MCF 10A (cell line): ENCODE measurements at regions of chr12 and their contacts with region 1.

Region 1: DNA sequence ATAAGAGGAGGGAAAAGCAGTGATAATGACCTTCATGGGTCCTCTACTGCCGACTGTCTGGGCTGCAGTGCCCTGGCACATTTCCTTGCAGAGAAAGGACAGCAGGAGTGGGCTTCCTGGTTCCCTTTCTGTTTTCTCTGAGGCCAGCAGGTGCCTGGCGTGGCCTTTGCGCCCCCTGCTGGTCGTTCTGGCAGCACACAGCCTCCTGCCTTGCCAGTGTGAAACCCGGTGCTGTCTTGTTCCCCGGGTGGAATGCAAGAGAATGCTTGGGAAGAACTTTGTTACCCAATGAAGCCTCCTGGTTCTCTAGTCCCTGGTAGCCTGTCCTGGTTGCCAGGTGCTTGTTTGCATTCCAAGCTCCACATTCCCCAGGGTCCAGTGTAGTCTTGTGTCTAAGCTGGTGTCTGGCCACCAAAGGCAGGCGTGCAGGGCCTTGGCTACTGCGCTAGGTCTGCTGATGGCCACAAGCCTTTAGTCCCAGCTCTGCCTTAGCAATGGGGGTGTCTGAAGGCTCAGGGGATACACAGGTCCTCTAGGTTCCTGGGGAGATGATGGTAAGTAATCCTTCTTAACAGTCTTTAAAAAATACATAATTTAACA is 1392.4 kb upstream of the TMEM132C start:
- DNase-seq: peak; percentile 60
- H3K4me3 Mint-ChIP-seq: no peak overlapping the region
- H3K27ac Mint-ChIP-seq: no peak overlapping the region
- H3K4me1 Mint-ChIP-seq: no peaks in the 10 kb centered on the region
- H3K27me3 Mint-ChIP-seq: no peaks in the 10 kb centered on the region
- CTCF ChIP-seq: peak; percentile 94

Region 2: DNA sequence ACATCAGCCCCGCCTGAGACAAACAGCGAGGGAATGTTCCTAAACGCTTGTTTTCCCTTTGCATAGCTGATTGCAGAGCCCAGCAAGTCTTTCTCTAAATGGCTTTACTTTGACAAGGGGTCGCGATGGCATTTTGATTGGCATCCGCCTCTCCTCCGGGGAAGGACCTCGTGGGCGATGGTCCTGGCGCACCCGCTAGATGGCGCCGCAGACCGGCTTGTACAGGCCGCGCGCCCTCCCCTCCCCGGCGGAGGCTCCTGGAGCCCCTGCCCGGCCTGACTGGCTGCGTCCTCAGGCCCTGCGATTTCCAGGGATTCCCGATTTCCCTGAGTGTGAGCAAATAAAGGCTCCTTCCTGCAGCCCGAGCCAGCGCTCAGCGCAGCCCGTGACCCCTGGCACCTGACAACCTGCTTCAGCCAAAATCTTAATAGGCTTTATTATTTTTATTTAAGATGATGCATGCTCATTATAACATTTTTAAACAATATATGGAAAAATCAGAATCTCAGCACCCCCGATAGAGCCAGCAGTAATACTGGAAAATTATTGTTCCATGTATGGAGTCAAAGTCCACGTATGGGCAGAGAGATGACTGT is 1341.0 kb before region 1 on chr12:
- CTCF ChIA-PET with region 1: interaction called, 12 read pairs
- POLR2A ChIA-PET with region 1: no interaction called
- intact Hi-C with region 1: loop called (anchors 1 kb)
- DNase-seq: peak; percentile 34
- H3K4me3 Mint-ChIP-seq: no peak overlapping the region
- H3K27ac Mint-ChIP-seq: no peak overlapping the region
- H3K4me1 Mint-ChIP-seq: no peaks in the 10 kb centered on the region
- H3K27me3 Mint-ChIP-seq: no peaks in the 10 kb centered on the region
- CTCF ChIP-seq: peak; percentile 90

Region 3: GRCh38 chr12:126636821-126637220 is 237.7 kb before region 1 on chr12:
- CTCF ChIA-PET with region 1: no interaction called
- POLR2A ChIA-PET with region 1: no interaction called
- intact Hi-C with region 1: no loop called
- DNase-seq: no peak
- H3K4me3 Mint-ChIP-seq: no peak overlapping the region
- H3K27ac Mint-ChIP-seq: no peak overlapping the region
- H3K4me1 Mint-ChIP-seq: no peaks in the 10 kb centered on the region
- H3K27me3 Mint-ChIP-seq: no peaks in the 10 kb centered on the region
- CTCF ChIP-seq: no peak

Region 4: DNA sequence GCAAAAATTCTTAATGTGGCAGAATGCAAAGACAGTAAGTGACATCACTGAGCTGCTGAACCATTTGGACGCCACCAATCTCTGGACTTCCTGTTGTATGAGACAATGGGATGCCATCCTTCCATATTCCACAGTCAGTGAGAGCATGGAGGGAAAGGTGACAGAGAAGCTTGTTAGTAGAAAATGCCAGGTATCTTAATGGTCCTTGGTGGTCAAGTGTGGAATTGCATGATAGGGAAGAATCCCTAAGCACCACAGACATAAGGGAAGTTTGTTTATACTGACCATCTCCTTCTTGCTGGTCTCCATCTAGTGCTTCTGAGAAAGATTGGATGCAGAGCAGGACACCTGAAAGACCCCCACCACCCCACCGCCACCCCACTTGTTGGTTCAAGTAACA is 17.6 kb before region 1 on chr12:
- CTCF ChIA-PET with region 1: interaction called, 11 read pairs
- POLR2A ChIA-PET with region 1: no interaction called
- intact Hi-C with region 1: no loop called
- DNase-seq: no peak
- H3K4me3 Mint-ChIP-seq: no peak overlapping the region
- H3K27ac Mint-ChIP-seq: no peak overlapping the region
- H3K4me1 Mint-ChIP-seq: no peaks in the 10 kb centered on the region
- H3K27me3 Mint-ChIP-seq: no peaks in the 10 kb centered on the region
- CTCF ChIP-seq: no peak

Region 5: DNA sequence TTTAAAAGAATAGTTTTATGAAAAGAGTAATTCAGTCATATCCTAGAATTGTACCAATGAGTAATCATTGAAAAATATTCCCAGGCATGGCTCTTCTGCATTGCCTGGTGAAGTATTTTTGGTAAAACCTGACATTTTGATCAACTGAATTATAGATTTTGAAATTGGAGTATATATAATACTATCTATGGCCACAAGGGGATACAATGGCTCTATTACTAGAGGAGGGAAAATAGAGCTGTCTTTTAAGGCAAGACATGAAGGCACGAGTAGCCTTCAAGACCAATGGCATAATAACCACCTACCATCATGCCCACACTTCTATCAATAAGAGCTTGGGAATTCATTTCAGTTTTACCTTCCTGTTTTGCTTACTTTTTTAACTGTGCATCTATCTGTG is 151.0 kb after region 1 on chr12:
- CTCF ChIA-PET with region 1: no interaction called
- POLR2A ChIA-PET with region 1: no interaction called
- intact Hi-C with region 1: no loop called
- DNase-seq: peak; percentile 14
- H3K4me3 Mint-ChIP-seq: no peak overlapping the region
- H3K27ac Mint-ChIP-seq: no peak overlapping the region
- H3K4me1 Mint-ChIP-seq: no peaks in the 10 kb centered on the region
- H3K27me3 Mint-ChIP-seq: no peaks in the 10 kb centered on the region
- CTCF ChIP-seq: peak; percentile 18

Region 6: DNA sequence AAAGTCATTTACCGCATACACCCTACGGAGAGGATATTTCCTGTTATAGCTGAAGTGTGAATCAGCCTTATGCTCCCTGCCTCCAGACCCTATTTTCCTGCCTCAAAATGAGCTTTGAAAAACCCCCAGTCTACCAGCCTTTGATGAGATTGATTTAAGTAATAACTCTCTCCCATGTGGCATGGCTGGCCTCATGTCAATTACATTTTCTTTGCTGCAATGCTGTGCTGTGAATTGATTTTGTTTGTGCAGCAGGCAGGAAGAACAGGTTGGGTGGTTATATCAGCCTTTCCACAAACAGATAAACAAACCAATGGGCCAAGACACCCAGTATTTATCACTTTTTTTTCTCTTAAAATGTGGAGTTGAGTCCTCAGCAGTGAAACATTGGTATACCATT is 286.9 kb after region 1 on chr12:
- CTCF ChIA-PET with region 1: no interaction called
- POLR2A ChIA-PET with region 1: no interaction called
- intact Hi-C with region 1: no loop called
- DNase-seq: no peak
- H3K4me3 Mint-ChIP-seq: no peak overlapping the region
- H3K27ac Mint-ChIP-seq: no peak overlapping the region
- H3K4me1 Mint-ChIP-seq: peaks cover 23% of the 10 kb centered on the region
- H3K27me3 Mint-ChIP-seq: no peaks in the 10 kb centered on the region
- CTCF ChIP-seq: no peak